Gastrocnemius medialis (tissue), 4 donors: ENCODE measurements at regions of chr9 and their contacts with region 1.

Region 1: GRCh38 chr9:128771745-128772519 is at the start of gene ZER1:
- DNase-seq: peak; percentile 87 to 88
- ATAC-seq: peak; percentile 93 to 94
- H3K4me3 ChIP-seq: peak within 1 kb of the TSS; percentile 90 to 100 (median 95)
- H3K27ac ChIP-seq: peak within 1 kb of the TSS; percentile 88 to 99 (median 96)
- H3K4me1 ChIP-seq: peaks cover 17 to 36% of the 10 kb centered on the region in 2 donors
- H3K27me3 ChIP-seq: no peaks in the 10 kb centered on the region
- CTCF ChIP-seq: no peak
- POLR2A ChIP-seq: peak; percentile 73 to 86
- total RNA-seq, gene ZER1: 63.6 to 115 (median 105) TPM

Region 2: DNA sequence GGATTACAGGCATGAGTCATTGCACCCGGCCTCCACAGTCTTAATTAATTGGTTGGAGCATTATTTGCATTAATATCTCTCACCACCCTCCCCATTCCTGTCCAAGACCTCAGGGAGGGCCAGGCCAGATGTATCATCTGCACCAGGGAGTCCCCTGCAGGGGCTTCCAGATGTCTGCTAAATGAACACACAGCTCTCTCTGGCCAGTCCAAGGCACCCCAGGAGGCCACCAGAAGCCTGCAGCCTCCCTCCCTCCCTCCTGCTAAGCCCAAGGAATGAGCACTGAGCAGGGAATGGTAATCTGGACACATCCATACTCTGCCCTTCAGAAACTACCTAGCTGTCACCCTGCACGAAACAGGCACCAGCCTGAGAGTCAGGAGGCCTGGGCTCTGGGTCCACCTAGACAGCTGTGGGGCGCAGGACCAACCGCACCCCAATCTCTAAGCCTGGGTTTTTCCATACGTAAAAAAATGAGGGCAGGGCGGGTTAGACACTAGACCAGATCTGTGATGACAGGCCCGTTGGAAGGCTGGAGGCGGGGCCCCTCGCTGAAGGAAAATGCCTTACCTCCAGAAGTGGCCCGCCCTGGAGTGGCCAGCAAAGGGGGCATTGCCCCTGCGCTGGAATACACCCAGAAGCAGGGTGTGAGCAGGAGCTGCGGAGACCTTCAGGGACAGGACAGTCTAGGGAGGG is 588.9 kb before region 1 on chr9:
- in situ Hi-C with region 1: no loop called
- intact Hi-C with region 1: no loop called
- DNase-seq: no peak
- ATAC-seq: no peak
- H3K4me3 ChIP-seq: no peak overlapping the region
- H3K27ac ChIP-seq: no peak overlapping the region
- H3K4me1 ChIP-seq: no peaks in the 10 kb centered on the region
- H3K27me3 ChIP-seq: no peaks in the 10 kb centered on the region
- CTCF ChIP-seq: no peak
- POLR2A ChIP-seq: no peak

Region 3: GRCh38 chr9:128575469-128575868 is 196.5 kb before region 1 on chr9:
- in situ Hi-C with region 1: no loop called
- intact Hi-C with region 1: no loop called
- DNase-seq: no peak
- ATAC-seq: peak in 1 of 2 donors; percentile 24
- H3K4me3 ChIP-seq: no peak overlapping the region
- H3K27ac ChIP-seq: no peak overlapping the region
- H3K4me1 ChIP-seq: no peaks in the 10 kb centered on the region
- H3K27me3 ChIP-seq: no peaks in the 10 kb centered on the region
- CTCF ChIP-seq: no peak
- POLR2A ChIP-seq: no peak

Region 4: GRCh38 chr9:128723866-128724743 is 47.8 kb before region 1 on chr9 and contains the start of gene ZDHHC12:
- in situ Hi-C with region 1: no loop called
- intact Hi-C with region 1: loop called (anchors 2 kb)
- DNase-seq: peak; percentile 92 to 98
- ATAC-seq: peak; percentile 90 to 93
- H3K4me3 ChIP-seq: peak within 1 kb of the TSS; percentile 62 to 85 (median 76)
- H3K27ac ChIP-seq: peak within 1 kb of the TSS; percentile 74 to 84 (median 80)
- H3K4me1 ChIP-seq: peaks cover 0 to 8% of the 10 kb centered on the region in 2 donors
- H3K27me3 ChIP-seq: no peaks in the 10 kb centered on the region
- CTCF ChIP-seq: no peak
- POLR2A ChIP-seq: peak; percentile 52 to 81
- total RNA-seq, gene ZDHHC12: 8.9 to 37.3 (median 31.0) TPM

Region 5: DNA sequence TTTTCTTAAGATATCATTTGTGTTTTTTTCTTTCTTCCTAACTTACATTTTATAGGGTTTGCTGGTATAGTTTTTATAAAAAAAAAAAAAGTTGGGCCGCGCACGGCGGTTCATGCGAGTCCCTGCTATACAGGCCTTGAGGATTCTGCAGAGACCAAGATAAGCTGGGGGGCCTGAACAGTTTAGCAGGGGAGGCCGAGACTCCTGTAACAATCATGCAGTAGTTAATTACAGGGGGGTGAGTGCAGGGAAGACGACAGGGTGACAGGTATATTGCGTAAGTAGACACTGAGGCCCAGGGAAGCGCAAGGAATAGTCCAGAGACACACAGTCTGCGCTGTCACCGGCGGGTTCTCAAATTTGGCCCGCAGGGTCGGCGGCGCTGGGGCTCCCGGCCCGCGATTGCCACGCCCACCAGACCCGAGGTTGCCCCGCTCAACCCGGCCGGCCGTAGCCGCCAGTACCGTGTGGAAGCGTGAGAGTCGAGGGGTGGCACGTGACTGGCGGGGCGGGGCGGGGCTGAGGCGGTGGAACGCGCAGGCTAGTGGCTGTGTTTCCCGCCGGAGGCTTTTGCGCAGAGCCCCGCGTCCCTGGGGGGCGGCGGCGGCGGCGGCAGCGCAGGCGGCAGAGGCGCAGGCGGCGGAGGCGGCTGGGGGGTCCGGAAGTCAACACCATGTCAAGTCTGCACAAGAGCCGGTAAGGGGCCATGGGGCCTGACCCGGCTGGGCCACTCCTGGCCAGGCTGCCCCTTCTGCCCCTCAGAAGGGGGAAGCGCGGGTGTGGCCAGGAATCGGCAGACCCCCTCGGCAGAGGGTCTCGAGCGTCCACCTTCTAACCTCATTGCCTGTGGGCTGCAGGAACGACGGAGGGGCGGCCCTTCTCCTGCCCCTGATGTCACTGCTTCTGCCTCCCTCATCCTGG is 15.0 kb after region 1 on chr9 and contains the start of gene TBC1D13:
- in situ Hi-C with region 1: no loop called
- intact Hi-C with region 1: loop called (anchors 1 kb)
- DNase-seq: peak; percentile 88 to 91
- ATAC-seq: peak; percentile 89 to 93
- H3K4me3 ChIP-seq: peak within 1 kb of the TSS; percentile 81 to 99 (median 90)
- H3K27ac ChIP-seq: peak within 1 kb of the TSS; percentile 89 to 96 (median 90)
- H3K4me1 ChIP-seq: peaks cover 16 to 25% of the 10 kb centered on the region in 2 donors
- H3K27me3 ChIP-seq: no peaks in the 10 kb centered on the region
- CTCF ChIP-seq: no peak
- POLR2A ChIP-seq: peak; percentile 76 to 77
- total RNA-seq, gene TBC1D13: 7.8 to 14.3 (median 11.3) TPM

Region 6: DNA sequence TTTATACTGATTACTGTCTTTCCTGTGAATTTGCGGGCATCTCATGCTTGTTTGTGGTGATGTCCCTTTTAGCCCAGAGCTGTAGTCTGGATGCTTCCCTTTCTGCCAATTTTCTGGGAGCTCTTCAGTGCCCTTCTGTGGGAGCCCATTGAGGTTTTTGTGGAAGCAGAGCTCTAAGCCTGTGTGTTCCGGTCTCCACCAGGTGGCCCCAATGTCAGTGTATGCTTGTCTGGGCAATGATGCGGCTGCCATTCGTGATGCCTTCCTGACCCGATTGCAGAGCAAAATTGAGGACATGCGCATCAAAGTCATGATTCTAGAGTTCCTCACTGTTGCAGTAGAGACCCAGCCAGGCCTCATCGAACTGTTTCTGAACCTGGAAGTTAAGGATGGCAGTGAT is 221.1 kb after region 1 on chr9:
- in situ Hi-C with region 1: no loop called
- intact Hi-C with region 1: no loop called
- DNase-seq: no peak
- ATAC-seq: no peak
- H3K4me3 ChIP-seq: no peak overlapping the region
- H3K27ac ChIP-seq: no peak overlapping the region
- H3K4me1 ChIP-seq: peaks cover 2 to 4% of the 10 kb centered on the region in 2 donors
- H3K27me3 ChIP-seq: no peaks in the 10 kb centered on the region
- CTCF ChIP-seq: peak in 1 of 5 experiments; percentile 24
- POLR2A ChIP-seq: no peak